ENCODE measurements at regions of chr9 and their contacts with region 1.

Region 1: GRCh38 chr9:72856972-72857623 is 95.8 kb downstream of the ALDH1A1 start:
- DNase-seq: no peak
- H3K4me3 ChIP-seq: no peak overlapping the region
- H3K27ac ChIP-seq: no peak overlapping the region
- H3K4me1 ChIP-seq: peaks cover 0 to 2% (median 1%) of the 10 kb centered on the region in 4 experiments; a peak in 3 of 7 replicates
- H3K27me3 ChIP-seq: no peaks in the 10 kb centered on the region
- CTCF ChIP-seq: peak in 2 of 3 experiments; percentile 45 to 54; a peak in 2 of 4 replicates
- EP300 ChIP-seq: no peak
- POLR2A ChIP-seq: no peak
- RAD21 ChIP-seq: peak; percentile 58 to 67

Region 2: GRCh38 chr9:72779614-72780013 is 77.5 kb before region 1 on chr9:
- CTCF ChIA-PET with region 1: no interaction called
- POLR2A ChIA-PET with region 1: no interaction called
- DNase-seq: no peak
- H3K4me3 ChIP-seq: no peak overlapping the region
- H3K27ac ChIP-seq: no peak overlapping the region
- H3K4me1 ChIP-seq: no peaks in the 10 kb centered on the region
- H3K27me3 ChIP-seq: no peaks in the 10 kb centered on the region
- CTCF ChIP-seq: no peak
- EP300 ChIP-seq: no peak
- POLR2A ChIP-seq: no peak
- RAD21 ChIP-seq: no peak

Region 3: DNA sequence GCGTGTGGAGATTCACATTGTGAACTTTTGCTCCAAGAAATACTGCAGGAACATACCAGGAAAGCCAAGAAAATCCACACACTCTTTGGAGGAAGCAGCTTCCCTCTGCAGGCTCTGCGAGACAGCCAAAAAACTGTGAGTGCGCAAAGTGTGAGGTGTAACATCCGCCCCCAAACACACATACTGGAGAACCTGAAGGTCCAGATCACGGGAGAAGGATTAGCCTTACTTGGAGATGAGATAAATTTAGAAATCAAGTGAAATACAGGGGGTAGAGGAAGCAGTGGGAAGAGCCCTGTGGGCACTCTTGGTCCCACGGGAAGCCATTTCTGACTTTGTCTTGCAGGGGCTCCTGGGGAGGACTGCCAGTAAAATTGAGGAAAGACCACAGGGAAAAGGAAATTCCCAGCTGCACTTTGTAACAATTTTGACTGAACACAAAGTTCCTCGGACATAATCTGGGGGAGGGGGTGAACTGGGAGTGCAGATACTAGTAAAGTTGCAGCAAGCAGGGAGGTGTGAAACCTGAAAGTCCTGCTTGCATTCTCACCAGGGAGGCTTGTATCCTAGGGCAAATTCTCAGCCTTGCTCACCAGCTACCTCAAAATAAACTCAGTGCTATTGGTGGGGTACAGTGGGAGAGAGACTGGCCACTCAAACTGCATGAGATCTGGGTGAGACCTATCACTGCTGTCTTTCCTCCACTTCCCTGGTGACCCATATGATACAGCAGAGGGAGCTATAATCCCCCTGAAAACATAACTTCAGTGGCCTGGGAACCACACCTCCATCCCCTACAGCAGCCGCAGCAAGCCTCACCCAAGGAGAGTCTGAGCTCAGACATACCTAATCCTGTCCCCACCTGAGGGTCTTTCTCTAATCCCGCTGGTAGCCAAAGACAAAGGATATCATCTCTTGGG is 13.3 kb before region 1 on chr9:
- CTCF ChIA-PET with region 1: interaction called, 39 read pairs
- POLR2A ChIA-PET with region 1: no interaction called
- DNase-seq: no peak
- H3K4me3 ChIP-seq: no peak overlapping the region
- H3K27ac ChIP-seq: no peak overlapping the region
- H3K4me1 ChIP-seq: peaks cover 0 to 2% (median 0%) of the 10 kb centered on the region in 4 experiments; a peak in 1 of 7 replicates
- H3K27me3 ChIP-seq: no peaks in the 10 kb centered on the region
- CTCF ChIP-seq: peak in 2 of 3 experiments; percentile 20 to 58; a peak in 3 of 4 replicates
- EP300 ChIP-seq: no peak
- POLR2A ChIP-seq: no peak
- RAD21 ChIP-seq: peak; percentile 54 to 61

Region 4: GRCh38 chr9:72871685-72872084 is 14.6 kb after region 1 on chr9:
- CTCF ChIA-PET with region 1: interaction called, 15 read pairs
- POLR2A ChIA-PET with region 1: no interaction called
- DNase-seq: no peak
- H3K4me3 ChIP-seq: no peak overlapping the region
- H3K27ac ChIP-seq: no peak overlapping the region
- H3K4me1 ChIP-seq: peaks cover 0 to 3% (median 1%) of the 10 kb centered on the region in 4 experiments; a peak in 3 of 7 replicates
- H3K27me3 ChIP-seq: no peaks in the 10 kb centered on the region
- CTCF ChIP-seq: peak in 2 of 3 experiments; percentile 21 to 37; a peak in 2 of 4 replicates
- EP300 ChIP-seq: no peak
- POLR2A ChIP-seq: no peak
- RAD21 ChIP-seq: peak; percentile 55 to 61

Region 5: DNA sequence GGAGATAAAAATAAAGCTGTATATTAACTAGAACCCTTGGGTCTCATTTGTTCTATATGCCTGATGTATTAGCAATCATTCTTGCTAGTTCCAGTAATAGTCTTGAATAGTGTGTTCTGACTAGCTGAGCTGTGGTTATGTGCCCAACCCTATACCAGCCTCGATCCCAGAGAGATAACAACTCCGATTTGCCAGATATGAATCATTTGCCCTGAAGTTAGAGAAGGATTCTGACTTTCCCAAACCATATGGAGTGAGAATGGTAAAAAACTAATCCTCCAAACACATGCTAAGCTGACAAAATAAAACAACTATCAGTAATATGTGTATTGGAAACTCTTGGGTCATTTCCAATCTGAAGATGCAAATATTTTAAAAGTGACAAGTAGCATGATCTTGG is 31.0 kb after region 1 on chr9:
- CTCF ChIA-PET with region 1: no interaction called
- POLR2A ChIA-PET with region 1: no interaction called
- DNase-seq: no peak
- H3K4me3 ChIP-seq: no peak overlapping the region
- H3K27ac ChIP-seq: no peak overlapping the region
- H3K4me1 ChIP-seq: no peaks in the 10 kb centered on the region
- H3K27me3 ChIP-seq: no peaks in the 10 kb centered on the region
- CTCF ChIP-seq: no peak
- EP300 ChIP-seq: no peak
- POLR2A ChIP-seq: no peak
- RAD21 ChIP-seq: no peak

Region 6: DNA sequence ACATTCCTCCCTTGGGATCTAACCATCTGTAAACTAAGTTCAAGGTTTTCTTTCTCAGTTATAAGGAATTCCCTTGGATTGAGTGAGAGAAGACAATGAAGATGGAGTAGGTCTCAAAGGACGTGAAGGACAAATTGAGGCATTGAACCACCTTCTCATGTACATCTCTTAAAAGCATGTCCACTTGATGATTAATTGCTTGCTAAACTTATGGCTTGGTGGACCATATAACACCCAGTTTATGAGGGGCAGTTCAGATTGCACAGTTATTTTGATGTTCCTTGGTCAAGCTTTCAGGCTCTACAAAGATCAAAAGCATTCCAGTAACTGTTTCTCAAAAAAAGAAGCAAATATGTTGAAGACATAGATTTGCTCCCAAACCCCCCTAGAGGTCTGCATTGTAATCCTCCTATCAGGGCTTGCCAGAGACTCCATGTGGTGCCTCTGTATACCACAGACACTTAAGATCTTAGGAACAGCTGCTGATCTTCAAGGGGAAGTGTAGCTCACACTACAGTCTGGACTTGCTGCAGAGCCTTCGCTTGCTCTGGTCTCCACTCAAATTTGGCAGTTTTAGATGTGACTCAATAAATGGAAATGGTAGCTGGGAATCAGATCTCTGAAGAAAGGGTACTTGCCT is 152.7 kb after region 1 on chr9:
- CTCF ChIA-PET with region 1: interaction called, 12 read pairs
- POLR2A ChIA-PET with region 1: no interaction called
- DNase-seq: no peak
- H3K4me3 ChIP-seq: no peak overlapping the region
- H3K27ac ChIP-seq: no peak overlapping the region
- H3K4me1 ChIP-seq: no peaks in the 10 kb centered on the region
- H3K27me3 ChIP-seq: no peaks in the 10 kb centered on the region
- CTCF ChIP-seq: peak in 1 of 3 experiments; percentile 9; a peak in 1 of 4 replicates
- EP300 ChIP-seq: no peak
- POLR2A ChIP-seq: no peak
- RAD21 ChIP-seq: no peak